ENCODE measurements at regions of chr1 and their contacts with region 1.

Region 1: DNA sequence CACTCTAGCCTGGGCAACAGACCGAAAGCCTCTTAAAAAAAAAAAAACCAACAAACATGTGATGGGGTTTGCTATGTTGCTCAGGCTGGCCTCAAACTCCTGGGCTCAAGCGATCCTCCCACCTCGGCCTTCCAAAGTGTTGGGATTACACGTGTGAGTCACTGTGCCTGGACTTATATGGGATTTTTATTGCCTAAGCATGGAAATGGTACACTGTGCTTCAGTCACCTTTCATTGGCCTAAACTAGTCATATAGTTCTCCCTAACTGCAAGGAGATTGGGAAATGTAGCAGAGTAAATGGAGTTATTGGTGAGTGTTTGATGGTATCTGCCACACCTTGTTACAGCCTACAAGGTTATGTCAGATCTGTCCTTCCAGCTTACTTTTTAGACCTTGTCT is 17.2 kb upstream of the MEF2D start:
- DNase-seq: no peak
- H3K4me3 ChIP-seq: no peak overlapping the region
- H3K27ac ChIP-seq: no peak overlapping the region
- H3K4me1 ChIP-seq: no peaks in the 10 kb centered on the region
- H3K27me3 ChIP-seq: no peaks in the 10 kb centered on the region
- CTCF ChIP-seq: no peak

Region 2: DNA sequence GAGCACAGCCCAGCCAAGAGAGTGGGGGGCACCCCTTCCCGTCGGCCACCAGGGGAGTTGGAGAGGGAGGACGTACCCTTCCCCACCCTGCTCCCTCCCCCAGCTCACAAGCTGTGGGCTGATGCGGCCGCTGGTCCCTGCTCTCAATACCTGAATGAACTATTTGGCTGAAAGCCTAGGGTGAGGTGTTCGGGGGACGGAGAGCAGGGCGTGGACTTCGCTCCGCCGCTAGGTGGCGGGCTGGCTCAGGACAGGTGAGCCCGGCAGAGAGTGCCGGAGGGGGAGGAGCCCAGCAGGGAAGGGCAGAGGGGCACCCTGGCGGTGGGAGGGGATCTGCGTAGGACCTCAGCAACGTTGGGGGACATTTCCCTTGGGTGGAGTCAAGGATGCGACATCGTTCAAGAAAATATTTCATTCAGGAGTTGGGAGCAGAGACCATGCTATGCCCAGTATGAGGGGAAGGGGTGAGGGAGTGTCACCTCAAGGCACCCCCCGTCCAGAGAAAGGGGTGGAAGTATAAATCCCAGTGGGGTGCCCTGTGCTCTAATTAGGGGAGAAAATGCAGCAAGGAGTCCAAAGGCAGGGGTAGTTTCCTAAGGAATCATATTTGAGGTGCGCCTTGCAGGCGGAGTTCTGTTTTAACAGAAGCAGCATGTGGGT is 160.7 kb before region 1 on chr1:
- intact Hi-C with region 1: no loop called
- DNase-seq: no peak
- H3K4me3 ChIP-seq: no peak overlapping the region
- H3K27ac ChIP-seq: no peak overlapping the region
- H3K4me1 ChIP-seq: peaks cover 0 to 4% (median 0%) of the 10 kb centered on the region in 4 donors
- H3K27me3 ChIP-seq: peaks cover 0 to 41% of the 10 kb centered on the region in 2 donors
- CTCF ChIP-seq: peak; percentile 46 to 56

Region 3: DNA sequence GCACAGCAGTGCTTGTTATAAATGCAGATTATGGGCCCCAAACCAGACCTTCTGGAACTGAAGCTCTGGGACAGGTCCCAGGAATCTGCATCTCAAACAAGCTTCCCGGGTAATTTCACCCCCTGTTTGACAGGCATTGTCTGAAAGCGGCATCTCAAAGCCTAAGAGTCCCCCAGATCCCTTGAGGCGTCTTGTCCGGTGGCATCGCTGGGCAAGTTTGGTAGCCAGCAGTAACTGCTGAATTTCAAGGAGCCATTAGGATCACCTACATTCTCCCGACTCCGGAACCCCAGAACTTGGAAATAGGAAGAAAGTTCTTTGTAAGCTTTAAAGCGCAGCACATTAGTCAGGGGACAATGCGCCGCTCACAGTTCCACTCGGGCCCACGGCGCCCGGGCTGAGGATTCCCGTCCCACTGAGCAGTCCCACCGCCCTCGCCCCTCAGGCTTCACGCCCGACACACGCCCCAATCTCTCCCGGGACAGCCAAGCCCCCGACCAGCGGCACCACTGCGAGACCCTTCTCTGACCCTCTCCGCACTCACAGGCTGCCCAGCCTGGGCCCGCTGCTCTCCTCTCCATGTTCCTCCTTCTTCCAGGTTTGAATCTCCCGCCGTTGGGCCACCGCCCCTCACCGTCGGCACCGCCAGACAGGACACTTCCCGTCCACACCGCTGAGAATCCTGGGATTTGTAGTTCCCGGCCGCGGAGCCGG is 54.4 kb after region 1 on chr1 and contains the start of gene IQGAP3:
- intact Hi-C with region 1: loop called (anchors 5 kb)
- DNase-seq: peak; percentile 79 to 90
- H3K4me3 ChIP-seq: peak within 1 kb of the TSS; percentile 31 to 43
- H3K27ac ChIP-seq: no peak within 1 kb of the TSS
- H3K4me1 ChIP-seq: peaks cover 0 to 16% (median 7%) of the 10 kb centered on the region in 4 donors
- H3K27me3 ChIP-seq: no peaks in the 10 kb centered on the region
- CTCF ChIP-seq: no peak

Region 4: GRCh38 chr1:156608036-156608674 is 90.4 kb after region 1 on chr1:
- intact Hi-C with region 1: no loop called
- DNase-seq: no peak
- H3K4me3 ChIP-seq: no peak overlapping the region
- H3K27ac ChIP-seq: peak overlapping the region in 1 of 2 donors; percentile 14
- H3K4me1 ChIP-seq: peaks cover 0 to 6% (median 0%) of the 10 kb centered on the region in 4 donors
- H3K27me3 ChIP-seq: no peaks in the 10 kb centered on the region
- CTCF ChIP-seq: peak; percentile 83 to 89

Region 5: DNA sequence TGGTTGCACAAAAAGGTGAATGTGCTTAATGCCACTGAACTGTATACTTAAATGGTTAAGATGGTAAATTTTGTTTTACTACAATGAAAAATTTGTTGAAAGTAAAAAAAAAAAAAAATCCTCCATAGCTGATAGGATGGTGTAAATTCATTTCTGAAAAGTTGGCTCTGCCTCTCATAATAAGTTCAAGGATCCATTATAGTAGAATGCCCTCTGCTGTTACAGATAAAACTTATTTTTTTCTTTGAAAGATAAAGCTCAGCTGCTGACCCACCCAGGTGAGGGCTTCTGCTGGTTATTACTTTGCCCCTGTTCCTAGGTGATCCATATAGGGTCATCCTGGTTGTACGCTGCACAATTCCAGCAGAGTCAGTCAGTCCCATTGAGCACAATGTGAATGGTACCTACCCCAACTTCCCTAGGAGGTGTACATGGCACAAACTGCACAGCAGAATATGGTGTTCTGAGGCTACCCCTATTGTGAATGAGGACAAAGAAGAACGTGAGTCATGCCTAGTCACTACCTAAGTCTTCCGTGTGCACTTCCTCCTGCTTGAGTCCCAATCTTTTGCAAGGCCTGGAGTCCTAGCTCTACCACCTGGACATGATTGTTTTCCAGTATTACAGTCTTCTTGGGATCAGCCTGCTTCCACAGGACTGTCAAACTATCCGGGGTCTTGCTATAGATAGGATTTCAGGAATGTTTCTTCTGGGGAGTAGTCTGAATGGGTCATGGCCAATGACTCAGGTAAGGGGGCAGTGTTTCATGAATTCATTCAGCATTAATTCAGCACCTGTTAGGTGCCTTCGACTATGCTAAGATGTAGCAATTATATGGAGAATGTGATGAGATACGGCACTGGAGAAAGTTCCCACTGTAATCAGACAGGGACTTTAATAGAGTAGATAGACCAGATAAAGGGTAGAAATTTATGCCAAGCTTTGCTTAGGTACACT is 1344.6 kb after region 1 on chr1:
- intact Hi-C with region 1: no loop called
- DNase-seq: no peak
- H3K4me3 ChIP-seq: no peak overlapping the region
- H3K27ac ChIP-seq: no peak overlapping the region
- H3K4me1 ChIP-seq: no peaks in the 10 kb centered on the region
- H3K27me3 ChIP-seq: no peaks in the 10 kb centered on the region
- CTCF ChIP-seq: no peak

Measured in tibial artery (tissue), 4 donors.